GM12878 (cell line): ENCODE measurements at regions of chr1 and their contacts with region 1.

Region 1: DNA sequence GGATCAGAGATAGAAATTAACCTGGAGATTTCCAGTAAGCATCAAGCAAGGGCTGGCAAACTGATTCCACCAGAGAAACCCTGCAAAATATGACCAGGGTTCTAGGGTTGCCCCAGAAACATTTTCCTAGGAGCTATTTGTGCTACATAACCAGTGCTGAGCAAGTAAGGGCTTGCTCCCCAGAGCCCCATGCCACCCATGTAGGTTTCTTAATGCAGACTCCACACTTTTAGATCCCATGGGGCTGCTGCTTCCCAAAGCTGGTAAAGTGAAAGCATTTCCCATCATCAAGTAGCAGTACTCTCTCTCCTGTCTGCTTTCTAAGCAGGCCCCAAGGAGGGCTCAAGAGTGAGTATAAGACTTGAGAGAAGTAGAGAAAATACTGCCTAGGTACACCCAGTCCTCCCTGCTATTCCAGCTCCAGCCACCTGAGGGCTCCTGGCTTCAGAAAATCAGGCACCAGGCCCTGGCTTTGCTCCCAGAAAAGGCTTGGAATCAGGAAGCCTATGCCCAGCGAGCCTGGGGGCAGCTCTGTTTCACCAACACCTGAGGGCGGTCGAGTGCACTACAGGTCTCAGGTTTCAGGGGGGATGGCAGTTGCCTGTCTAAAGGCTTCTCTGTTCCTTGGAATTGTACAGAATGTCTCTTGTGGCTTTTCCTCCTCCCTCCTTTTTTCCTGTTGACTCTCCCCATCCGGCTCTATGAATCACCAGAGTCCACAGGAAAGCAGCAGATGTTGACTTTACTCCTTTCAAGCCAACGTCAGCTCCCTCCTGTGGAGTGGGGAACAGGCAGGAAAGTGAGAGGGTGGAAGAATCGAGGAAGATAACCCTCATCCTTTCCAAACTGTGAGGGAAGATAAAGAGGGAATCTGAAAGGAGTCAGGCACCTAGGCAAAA is 6.2 kb upstream of the ANKRD35 start:
- DNase-seq: no peak
- ATAC-seq: peak; percentile 95
- H3K4me3 ChIP-seq: no peak overlapping the region
- H3K27ac ChIP-seq: no peak overlapping the region
- H3K4me1 ChIP-seq: no peaks in the 10 kb centered on the region
- H3K27me3 ChIP-seq: no peaks in the 10 kb centered on the region
- CTCF ChIP-seq: peak; percentile 89 to 90 (median 90)
- EP300 ChIP-seq: no peak
- POLR2A ChIP-seq: no peak
- RAD21 ChIP-seq: peak; percentile 81

Region 2: GRCh38 chr1:145906954-145907753 is 15.3 kb after region 1 on chr1:
- CTCF ChIA-PET with region 1: interaction called, 66 read pairs
- POLR2A ChIA-PET with region 1: no interaction called
- RAD21 ChIA-PET with region 1: interaction called, 6 read pairs
- SMC1A ChIA-PET with region 1: interaction called, 5 read pairs
- in situ Hi-C with region 1: no loop called
- intact Hi-C with region 1: loop called (anchors 2 kb)
- DNase-seq: no peak
- ATAC-seq: no peak
- H3K4me3 ChIP-seq: no peak overlapping the region
- H3K27ac ChIP-seq: no peak overlapping the region
- H3K4me1 ChIP-seq: peaks cover 2% of the 10 kb centered on the region; the same call in 1 of the 2 replicates
- H3K27me3 ChIP-seq: no peaks in the 10 kb centered on the region
- CTCF ChIP-seq: no peak
- EP300 ChIP-seq: no peak
- POLR2A ChIP-seq: no peak
- RAD21 ChIP-seq: no peak

Region 3: DNA sequence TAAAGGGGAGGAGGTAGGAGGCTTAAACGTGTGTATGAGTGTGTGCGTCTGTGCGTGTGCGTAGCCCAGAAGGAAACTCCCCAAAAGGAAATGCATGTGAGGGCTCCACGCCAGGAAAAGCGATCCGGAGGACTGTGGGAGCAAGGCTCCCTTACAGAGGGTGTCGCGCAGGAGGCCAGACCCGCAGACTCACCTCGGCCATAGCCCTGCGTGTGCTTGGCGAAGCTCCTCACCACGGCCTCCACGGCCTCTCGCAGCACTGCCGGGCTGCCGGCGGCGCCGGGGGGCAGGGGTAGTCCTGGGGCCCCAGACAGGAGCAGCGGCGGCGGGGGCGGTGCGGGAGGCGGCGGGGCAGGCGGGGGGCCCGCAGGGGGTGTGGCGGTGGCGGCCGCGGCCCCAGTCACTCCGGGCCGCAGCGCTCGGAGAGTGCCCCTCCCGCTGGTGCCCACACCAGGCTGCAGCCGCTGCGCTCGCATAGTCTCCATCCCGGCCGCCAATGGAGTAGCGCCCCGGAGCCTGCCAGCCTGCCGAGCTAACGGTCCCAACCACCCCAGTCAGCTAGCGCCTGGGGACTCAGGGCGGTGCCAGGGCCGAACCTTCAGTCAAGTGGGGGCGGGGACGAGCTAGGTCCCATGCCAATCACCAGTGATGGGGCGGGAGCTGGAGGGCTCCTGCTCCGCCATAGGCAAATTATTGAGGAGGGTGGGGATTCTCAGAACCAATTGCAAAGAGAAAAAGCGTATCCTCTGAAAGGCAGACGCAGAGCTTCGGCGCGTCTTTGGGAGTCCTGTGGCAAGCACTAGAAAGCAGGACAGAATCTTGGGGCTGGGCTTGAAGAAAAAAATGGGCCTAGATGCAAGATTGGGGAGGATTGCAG is 65.8 kb after region 1 on chr1 and contains the start of gene LIX1L:
- CTCF ChIA-PET with region 1: interaction called, 8 read pairs
- POLR2A ChIA-PET with region 1: no interaction called
- RAD21 ChIA-PET with region 1: interaction called, 10 read pairs
- SMC1A ChIA-PET with region 1: interaction called, 4 read pairs
- in situ Hi-C with region 1: no loop called
- intact Hi-C with region 1: no loop called
- DNase-seq: peak; percentile 89
- ATAC-seq: peak; percentile 90
- H3K4me3 ChIP-seq: peak within 1 kb of the TSS; percentile 78
- H3K27ac ChIP-seq: peak within 1 kb of the TSS; percentile 73
- H3K4me1 ChIP-seq: peaks cover 8% of the 10 kb centered on the region
- H3K27me3 ChIP-seq: no peaks in the 10 kb centered on the region; a peak in 1 of 4 replicates
- CTCF ChIP-seq: no peak
- EP300 ChIP-seq: no peak
- POLR2A ChIP-seq: peak; percentile 86
- RAD21 ChIP-seq: no peak
- polyA plus RNA-seq, gene LIX1L: 5.5 to 12.2 TPM

Region 4: GRCh38 chr1:146007506-146008133 is 115.8 kb after region 1 on chr1:
- CTCF ChIA-PET with region 1: interaction called, 27 read pairs
- POLR2A ChIA-PET with region 1: interaction called, 6 read pairs
- RAD21 ChIA-PET with region 1: interaction called, 8 read pairs
- SMC1A ChIA-PET with region 1: interaction called, 12 read pairs
- in situ Hi-C with region 1: loop called (anchors 5 kb)
- intact Hi-C with region 1: no loop called
- DNase-seq: no peak
- ATAC-seq: no peak
- H3K4me3 ChIP-seq: no peak overlapping the region
- H3K27ac ChIP-seq: no peak overlapping the region
- H3K4me1 ChIP-seq: no peaks in the 10 kb centered on the region
- H3K27me3 ChIP-seq: no peaks in the 10 kb centered on the region
- CTCF ChIP-seq: no peak
- EP300 ChIP-seq: no peak
- POLR2A ChIP-seq: no peak
- RAD21 ChIP-seq: no peak

Region 5: DNA sequence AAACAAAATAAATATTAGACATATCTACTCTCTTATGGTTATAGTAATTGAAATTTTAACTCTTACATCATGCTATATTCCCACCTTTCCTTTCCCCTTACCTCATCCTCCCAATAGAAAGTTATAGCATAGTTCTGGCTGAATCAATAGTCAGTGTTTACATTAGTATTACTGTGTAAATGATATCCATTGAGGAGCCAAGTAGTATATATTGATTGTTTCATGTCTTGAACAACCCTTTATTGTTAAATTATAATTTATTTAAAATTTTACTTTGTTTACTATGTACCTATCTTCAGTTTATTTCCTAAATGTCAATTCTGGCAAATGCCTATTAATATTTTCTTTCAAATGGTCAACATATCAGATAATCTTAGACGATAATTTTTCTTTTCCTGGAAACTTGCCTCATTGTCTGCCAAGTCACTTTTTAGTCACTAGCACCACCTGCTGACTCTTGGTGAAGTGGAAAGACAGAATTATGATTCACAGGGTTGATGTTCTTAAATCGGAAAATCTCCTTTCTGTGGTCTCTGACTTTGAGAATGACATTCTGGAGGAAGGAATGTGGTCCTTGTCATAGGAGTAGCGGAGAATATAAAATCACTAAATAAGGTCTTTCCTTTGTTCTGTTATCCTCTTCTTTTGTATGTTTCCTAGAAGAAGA is 121.0 kb after region 1 on chr1:
- CTCF ChIA-PET with region 1: interaction called, 27 read pairs
- POLR2A ChIA-PET with region 1: interaction called, 6 read pairs
- RAD21 ChIA-PET with region 1: interaction called, 8 read pairs
- SMC1A ChIA-PET with region 1: interaction called, 12 read pairs
- in situ Hi-C with region 1: loop called (anchors 5 kb)
- intact Hi-C with region 1: loop called (anchors 1 kb)
- DNase-seq: no peak
- ATAC-seq: peak; percentile 84
- H3K4me3 ChIP-seq: no peak overlapping the region
- H3K27ac ChIP-seq: no peak overlapping the region
- H3K4me1 ChIP-seq: no peaks in the 10 kb centered on the region
- H3K27me3 ChIP-seq: peaks cover 0 to 1% of the 10 kb centered on the region in 2 experiments; a peak in 3 of 4 replicates
- CTCF ChIP-seq: peak; percentile 68 to 89 (median 76); a peak in 5 of 6 replicates
- EP300 ChIP-seq: no peak
- POLR2A ChIP-seq: no peak
- RAD21 ChIP-seq: peak; percentile 98

Region 6: DNA sequence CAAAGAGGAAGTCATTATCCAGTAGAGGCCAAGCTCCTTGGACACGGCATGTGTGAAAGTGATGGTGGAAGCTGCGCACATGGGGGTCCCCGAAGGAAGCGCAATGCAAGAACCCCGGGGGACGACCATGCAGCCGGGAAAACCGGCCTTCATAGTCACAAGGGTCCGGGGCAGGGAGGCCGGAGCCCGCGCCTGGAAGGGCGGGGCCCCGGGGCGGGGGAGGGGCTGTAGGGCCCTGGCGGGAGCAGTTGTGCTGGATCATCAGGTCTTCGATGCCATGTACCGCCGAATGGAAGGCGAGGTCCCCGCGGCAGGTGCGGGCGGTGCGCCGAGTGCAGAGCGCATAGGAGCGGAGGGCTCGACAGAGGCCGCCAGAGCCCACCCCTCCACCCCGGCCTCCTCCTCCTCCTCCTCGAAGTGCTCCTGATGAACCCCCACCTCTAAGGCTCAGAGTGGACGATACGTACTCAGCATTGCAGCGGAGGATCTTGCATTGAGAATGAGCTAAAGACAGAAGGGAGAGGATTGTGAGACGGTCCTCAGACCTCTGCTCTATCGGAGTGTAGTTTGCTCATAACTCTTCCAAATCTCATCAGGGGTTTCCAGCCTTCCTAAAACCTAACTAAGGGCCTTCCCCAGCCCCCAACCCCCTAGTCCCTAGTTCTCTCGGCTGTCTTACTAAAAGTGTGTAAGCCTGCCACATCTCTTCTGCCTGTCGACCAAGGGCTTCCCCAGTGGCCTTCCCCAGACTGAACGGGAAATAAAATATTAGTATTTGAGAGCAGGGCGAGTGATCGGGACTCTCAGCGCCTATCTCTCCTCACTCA is 127.6 kb after region 1 on chr1:
- CTCF ChIA-PET with region 1: interaction called, 13 read pairs
- POLR2A ChIA-PET with region 1: no interaction called
- RAD21 ChIA-PET with region 1: interaction called, 3 read pairs
- SMC1A ChIA-PET with region 1: interaction called, 4 read pairs
- in situ Hi-C with region 1: loop called (anchors 5 kb)
- intact Hi-C with region 1: no loop called
- DNase-seq: no peak
- ATAC-seq: no peak
- H3K4me3 ChIP-seq: no peak overlapping the region
- H3K27ac ChIP-seq: no peak overlapping the region
- H3K4me1 ChIP-seq: no peaks in the 10 kb centered on the region
- H3K27me3 ChIP-seq: peaks cover 4 to 8% of the 10 kb centered on the region in 2 experiments; a peak in 3 of 4 replicates
- CTCF ChIP-seq: no peak
- EP300 ChIP-seq: no peak
- POLR2A ChIP-seq: no peak
- RAD21 ChIP-seq: no peak